Dendritic cell treated with granulocyte-macrophage colony-stimulating factor and Interleukin-4, amounts not matched to agents 40 ng/mL and 50 ng/mL, for 4 days (primary cell): ENCODE measurements at regions of chr2 and their contacts with region 1.

Region 1: GRCh38 chr2:88919087-88919738 is 227.7 kb downstream of the RPIA start:
- H3K4me3 Mint-ChIP-seq: no peak overlapping the region
- H3K27ac Mint-ChIP-seq: no peak overlapping the region
- H3K4me1 Mint-ChIP-seq: no peaks in the 10 kb centered on the region
- H3K27me3 Mint-ChIP-seq: no peaks in the 10 kb centered on the region

Region 2: DNA sequence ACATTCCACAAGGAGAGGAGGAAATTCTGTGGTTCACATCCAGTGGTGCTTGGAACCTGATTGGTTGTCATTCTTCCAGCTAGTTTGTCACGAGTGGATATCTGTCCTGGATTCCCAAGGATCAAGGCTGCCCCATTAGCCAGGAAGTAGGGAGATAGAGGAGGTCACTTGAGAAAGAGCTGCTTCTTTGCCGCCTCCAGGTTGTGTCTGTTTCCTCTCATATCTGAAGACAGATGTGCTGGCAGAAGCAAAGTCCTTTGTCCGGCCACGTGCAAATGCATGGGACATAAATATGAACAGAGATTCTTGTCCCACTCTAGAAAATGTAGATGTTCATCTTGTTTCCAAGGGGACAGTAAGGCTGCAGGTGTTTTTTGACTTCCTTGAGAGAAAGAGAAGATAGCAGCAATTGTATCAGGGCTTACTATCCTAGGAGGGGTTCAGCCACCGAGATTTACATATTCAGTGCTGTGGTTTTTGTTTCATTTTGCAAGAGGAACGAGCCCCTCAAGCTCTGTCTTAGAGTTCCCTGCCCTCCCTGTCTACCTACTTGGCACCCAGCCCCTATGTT is 53.3 kb before region 1 on chr2:
- intact Hi-C with region 1: no loop called
- H3K4me3 Mint-ChIP-seq: no peak overlapping the region
- H3K27ac Mint-ChIP-seq: peak overlapping the region; percentile 1
- H3K4me1 Mint-ChIP-seq: peaks cover 28% of the 10 kb centered on the region
- H3K27me3 Mint-ChIP-seq: peaks cover 9% of the 10 kb centered on the region

Region 3: GRCh38 chr2:88880441-88880953 is 38.7 kb before region 1 on chr2:
- intact Hi-C with region 1: loop called (anchors 1 kb)
- H3K4me3 Mint-ChIP-seq: no peak overlapping the region
- H3K27ac Mint-ChIP-seq: no peak overlapping the region
- H3K4me1 Mint-ChIP-seq: peaks cover 4% of the 10 kb centered on the region
- H3K27me3 Mint-ChIP-seq: no peaks in the 10 kb centered on the region

Region 4: DNA sequence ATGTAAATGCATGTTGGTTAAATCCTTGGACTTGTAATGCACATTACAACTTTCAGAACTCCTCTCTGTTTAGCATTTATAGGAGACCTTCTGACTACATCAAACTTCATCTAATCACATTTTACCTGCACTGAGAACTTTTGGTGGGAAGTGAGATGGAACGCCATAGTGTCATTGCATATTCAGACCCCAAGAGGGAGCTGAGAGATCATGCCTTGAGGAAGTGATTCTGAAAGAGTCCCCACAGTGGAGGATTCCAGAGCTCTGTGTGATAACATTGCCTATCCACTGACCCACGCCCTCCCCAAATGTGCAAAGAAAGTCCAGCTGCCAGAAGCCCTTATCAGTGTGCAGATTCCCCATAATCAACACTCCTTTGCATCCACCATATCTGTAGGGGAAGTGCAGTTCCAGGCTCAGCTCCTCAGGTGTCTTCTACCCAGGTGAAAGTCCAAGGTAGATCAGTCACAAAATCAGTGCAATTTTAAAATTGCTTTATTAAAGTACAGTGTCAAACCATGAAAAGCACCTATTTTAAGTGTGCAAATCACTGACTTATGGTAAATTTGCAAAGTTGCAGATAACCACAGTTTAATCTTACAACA is 15.4 kb before region 1 on chr2:
- intact Hi-C with region 1: loop called (anchors 1 kb)
- H3K4me3 Mint-ChIP-seq: no peak overlapping the region
- H3K27ac Mint-ChIP-seq: no peak overlapping the region
- H3K4me1 Mint-ChIP-seq: peaks cover 14% of the 10 kb centered on the region
- H3K27me3 Mint-ChIP-seq: no peaks in the 10 kb centered on the region